ENCODE measurements at regions of chr3 and their contacts with region 1.

Region 1: DNA sequence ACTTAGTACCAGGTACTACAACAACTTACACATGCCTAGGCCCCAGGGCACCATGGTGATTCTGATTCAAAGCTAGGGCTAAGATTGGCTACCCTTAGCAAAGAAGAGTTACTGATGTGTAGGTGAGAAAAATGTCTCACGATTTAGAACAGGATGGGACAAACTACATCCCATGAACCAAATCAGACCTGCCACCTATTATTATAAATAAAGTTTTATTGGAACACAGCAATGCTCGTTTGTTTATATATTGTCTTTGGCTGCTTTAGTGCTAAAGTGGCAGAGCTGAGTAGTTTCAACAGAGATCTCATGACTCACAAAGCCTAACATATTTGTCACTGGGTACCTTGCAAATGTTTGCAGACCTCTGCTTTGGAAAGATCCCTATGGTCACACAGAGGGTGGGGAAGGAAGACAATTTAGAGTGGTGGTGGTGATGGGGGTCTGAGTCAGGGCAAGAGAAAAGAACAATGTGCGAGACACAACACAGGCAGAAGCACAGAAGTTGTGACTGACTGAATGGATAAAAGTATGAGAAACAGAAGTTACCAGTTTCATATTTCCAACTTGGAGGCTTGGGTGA is 770.6 kb upstream of the CFAP20DC start:
- DNase-seq: no peak
- ATAC-seq: no peak

Region 2: DNA sequence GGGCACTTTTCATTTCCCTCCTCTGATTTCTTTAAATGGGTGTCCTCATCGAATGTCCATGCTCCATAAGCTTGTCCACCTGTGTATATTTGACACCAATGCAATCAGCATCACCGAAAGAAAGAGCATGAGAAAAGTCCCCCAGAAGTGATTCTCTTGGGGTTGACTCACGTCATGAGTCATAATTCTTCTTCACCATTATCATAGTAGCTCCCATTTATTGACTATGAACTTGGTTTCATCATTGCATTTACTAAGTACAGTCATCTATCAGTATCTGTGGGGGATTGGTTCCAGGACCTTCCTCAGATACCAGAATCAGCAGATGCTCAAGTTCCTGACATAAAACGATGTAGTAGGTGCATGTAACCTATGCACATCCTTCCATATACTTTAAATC is 398.1 kb before region 1 on chr3:
- intact Hi-C with region 1: no loop called
- DNase-seq: no peak
- ATAC-seq: no peak

Region 3: GRCh38 chr3:59607656-59608055 is 212.8 kb before region 1 on chr3:
- intact Hi-C with region 1: loop called in 1 of 2 experiments (anchors 10 kb)
- DNase-seq: no peak
- ATAC-seq: peak; percentile 43 to 69

Region 4: DNA sequence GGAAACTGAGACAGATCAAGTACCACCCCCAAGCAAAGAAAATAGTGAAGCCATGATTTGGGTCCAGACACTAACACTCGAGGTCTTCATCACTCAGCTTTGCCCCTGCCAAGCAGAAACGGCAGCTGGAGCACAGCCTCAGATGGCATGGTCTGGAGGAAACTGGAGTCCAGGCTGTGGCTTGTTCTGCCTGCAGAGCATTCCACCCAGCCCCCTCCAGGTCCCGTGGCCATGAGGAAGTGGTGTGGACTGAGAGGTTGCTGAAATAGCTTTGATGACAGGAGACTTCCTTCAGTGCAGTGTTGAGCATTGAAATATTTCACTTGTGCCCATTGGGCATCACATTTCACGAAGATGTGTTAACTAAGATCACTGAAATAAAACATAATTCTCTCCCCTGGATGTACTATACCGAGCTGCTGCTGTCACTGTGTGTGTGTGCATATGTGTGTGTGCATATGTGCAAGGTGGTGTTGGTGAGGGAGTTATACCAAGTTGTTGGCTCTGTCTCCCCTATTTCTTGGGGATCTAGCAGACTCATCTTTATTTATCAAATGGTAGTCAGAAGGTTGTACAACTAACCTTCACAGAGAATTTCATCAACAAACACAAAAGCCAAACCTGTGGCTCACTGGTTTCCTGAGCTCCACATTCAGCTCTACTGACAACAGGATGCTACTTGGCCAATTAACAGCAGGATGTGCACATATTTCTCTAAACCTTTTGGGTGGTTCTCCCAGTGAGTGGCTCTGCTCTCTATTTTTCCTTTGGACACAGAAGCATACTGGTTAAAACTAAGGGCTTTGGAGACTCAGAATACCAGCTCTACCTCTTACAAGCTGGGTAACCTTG is 110.5 kb before region 1 on chr3:
- intact Hi-C with region 1: no loop called
- DNase-seq: peak; percentile 37
- ATAC-seq: peak; percentile 57 to 65

Region 5: GRCh38 chr3:60160111-60160821 is 339.8 kb after region 1 on chr3:
- intact Hi-C with region 1: no loop called
- DNase-seq: no peak
- ATAC-seq: no peak